ENCODE measurements at regions of chr4 and their contacts with region 1.

Region 1: GRCh38 chr4:185656467-185656931 is 121.2 kb upstream of the PDLIM3 start:
- DNase-seq: peak; percentile 83 to 87
- H3K4me3 ChIP-seq: no peak overlapping the region
- H3K27ac ChIP-seq: peak overlapping the region; percentile 71 to 81 (median 79)
- H3K4me1 ChIP-seq: peaks cover 28 to 30% of the 10 kb centered on the region in 2 donors
- H3K27me3 ChIP-seq: no peaks in the 10 kb centered on the region
- CTCF ChIP-seq: peak; percentile 35 to 81 (median 72)
- POLR2A ChIP-seq: peak in 1 of 2 donors; percentile 28

Region 2: DNA sequence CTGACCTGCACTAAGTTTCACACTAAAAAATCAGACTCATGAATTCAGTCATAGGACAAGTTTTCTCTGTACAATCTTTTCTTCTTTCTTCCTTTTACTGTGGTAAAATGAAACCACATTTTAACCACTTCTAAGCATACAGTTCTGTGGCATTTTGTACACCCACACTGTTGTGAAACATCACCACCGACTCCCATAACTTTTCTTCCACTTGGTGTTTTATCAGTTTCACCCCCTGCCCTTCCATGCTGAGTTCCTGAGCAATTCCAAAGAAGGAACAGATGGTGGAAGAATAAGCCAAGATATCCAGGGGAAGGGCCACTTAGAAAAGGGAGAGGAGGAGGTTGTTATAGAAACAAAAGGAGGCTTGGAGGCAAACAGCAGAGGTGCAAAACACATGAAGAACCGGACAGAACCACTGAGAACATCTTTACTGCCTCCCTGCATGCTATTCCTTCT is 490.9 kb before region 1 on chr4:
- intact Hi-C with region 1: no loop called
- DNase-seq: no peak
- H3K4me3 ChIP-seq: no peak overlapping the region
- H3K27ac ChIP-seq: no peak overlapping the region
- H3K4me1 ChIP-seq: no peaks in the 10 kb centered on the region
- H3K27me3 ChIP-seq: no peaks in the 10 kb centered on the region
- CTCF ChIP-seq: no peak
- POLR2A ChIP-seq: no peak

Region 3: GRCh38 chr4:185782523-185782922 is 126.0 kb after region 1 on chr4:
- intact Hi-C with region 1: loop called (anchors 10 kb)
- DNase-seq: no peak
- H3K4me3 ChIP-seq: no peak overlapping the region
- H3K27ac ChIP-seq: peak overlapping the region in 2 of 3 donors; percentile 54 to 78
- H3K4me1 ChIP-seq: peaks cover 16 to 48% of the 10 kb centered on the region in 2 donors
- H3K27me3 ChIP-seq: no peaks in the 10 kb centered on the region
- CTCF ChIP-seq: no peak
- POLR2A ChIP-seq: no peak